ENCODE measurements at regions of chr11 and their contacts with region 1.

Region 1: DNA sequence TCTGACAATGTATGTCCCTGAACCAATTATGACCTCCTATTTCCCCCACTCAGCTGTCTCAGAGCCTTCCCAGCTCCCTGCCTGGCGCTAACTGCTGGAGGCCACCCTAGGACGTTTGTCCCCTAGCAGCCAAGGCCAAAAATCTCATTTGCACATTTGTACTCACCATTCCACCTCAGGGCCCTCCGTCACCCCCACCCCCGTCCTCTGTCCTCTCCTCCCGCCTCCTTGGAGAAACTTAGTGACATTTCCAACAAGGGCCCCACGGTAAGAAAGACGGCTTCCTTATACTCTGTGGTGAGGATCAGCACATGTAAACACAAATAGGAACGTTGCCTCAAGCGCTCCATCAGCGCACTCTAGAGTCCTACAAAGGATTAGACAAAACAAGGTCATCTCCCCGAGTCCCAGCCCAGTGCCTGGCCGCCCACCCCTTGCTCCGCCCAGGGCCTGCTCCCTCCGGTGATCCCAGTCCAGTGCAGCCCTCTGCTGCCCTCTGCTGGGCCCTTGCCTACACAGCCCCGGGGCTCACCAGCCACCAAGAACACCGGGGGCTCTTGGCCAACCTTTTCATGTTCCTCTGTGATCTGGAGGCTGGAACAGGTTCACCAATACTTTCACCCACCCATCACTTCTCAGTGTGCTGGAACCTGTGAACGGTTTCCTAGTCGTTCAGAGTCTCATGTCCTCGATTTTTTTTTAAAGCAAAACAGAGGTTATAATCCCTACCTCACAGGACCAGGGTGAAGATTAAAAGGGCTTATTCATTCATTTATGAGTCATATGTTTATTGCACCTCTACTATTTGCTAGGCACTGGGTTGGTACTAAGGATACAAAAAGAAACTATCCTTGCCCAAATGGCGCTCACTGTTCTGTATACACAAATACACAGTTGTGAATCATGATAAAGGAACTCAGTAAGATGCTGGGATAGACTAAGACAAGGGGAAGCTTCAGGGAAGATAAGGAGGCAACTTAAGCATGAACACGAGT is 15.3 kb upstream of the CTR9 start:
- DNase-seq: peak; percentile 93
- ATAC-seq: peak; percentile 93
- H3K4me3 ChIP-seq: peak overlapping the region; percentile 66
- H3K27ac ChIP-seq: peak overlapping the region; percentile 88
- H3K4me1 ChIP-seq: peaks cover 11% of the 10 kb centered on the region
- H3K27me3 ChIP-seq: no peaks in the 10 kb centered on the region
- CTCF ChIP-seq: peak; percentile 97

Region 2: GRCh38 chr11:10322830-10323792 is 412.7 kb before region 1 on chr11:
- CTCF ChIA-PET with region 1: no interaction called
- POLR2A ChIA-PET with region 1: no interaction called
- intact Hi-C with region 1: loop called (anchors 5 kb)
- DNase-seq: peak; percentile 93
- ATAC-seq: peak; percentile 71
- H3K4me3 ChIP-seq: peak overlapping the region; percentile 15; the same call in 1 of the 2 replicates
- H3K27ac ChIP-seq: peak overlapping the region; percentile 29
- H3K4me1 ChIP-seq: peaks cover 43% of the 10 kb centered on the region
- H3K27me3 ChIP-seq: no peaks in the 10 kb centered on the region
- CTCF ChIP-seq: peak; percentile 72

Region 3: GRCh38 chr11:10514210-10514609 is 221.6 kb before region 1 on chr11:
- CTCF ChIA-PET with region 1: no interaction called
- POLR2A ChIA-PET with region 1: no interaction called
- intact Hi-C with region 1: loop called (anchors 1 kb)
- DNase-seq: peak; percentile 56
- ATAC-seq: no peak
- H3K4me3 ChIP-seq: no peak overlapping the region
- H3K27ac ChIP-seq: no peak overlapping the region
- H3K4me1 ChIP-seq: no peaks in the 10 kb centered on the region
- H3K27me3 ChIP-seq: no peaks in the 10 kb centered on the region
- CTCF ChIP-seq: peak; percentile 65

Region 4: GRCh38 chr11:10623797-10624761 is 111.7 kb before region 1 on chr11:
- CTCF ChIA-PET with region 1: interaction called, 3 read pairs
- POLR2A ChIA-PET with region 1: no interaction called
- intact Hi-C with region 1: loop called (anchors 1 kb)
- DNase-seq: peak; percentile 47
- ATAC-seq: no peak; the same call in none of the 2 replicates
- H3K4me3 ChIP-seq: no peak overlapping the region
- H3K27ac ChIP-seq: no peak overlapping the region
- H3K4me1 ChIP-seq: peaks cover 9% of the 10 kb centered on the region
- H3K27me3 ChIP-seq: no peaks in the 10 kb centered on the region
- CTCF ChIP-seq: peak; percentile 65

Region 5: GRCh38 chr11:10680956-10681487 is 54.8 kb before region 1 on chr11:
- CTCF ChIA-PET with region 1: no interaction called
- POLR2A ChIA-PET with region 1: no interaction called
- intact Hi-C with region 1: no loop called
- DNase-seq: no peak
- ATAC-seq: peak; percentile 31; the same call in 1 of the 2 replicates
- H3K4me3 ChIP-seq: no peak overlapping the region
- H3K27ac ChIP-seq: no peak overlapping the region
- H3K4me1 ChIP-seq: no peaks in the 10 kb centered on the region
- H3K27me3 ChIP-seq: no peaks in the 10 kb centered on the region
- CTCF ChIP-seq: no peak

Measured in PC-3 (cell line).